CD4-positive, alpha-beta T cell (primary cell): ENCODE measurements at regions of chr11 and their contacts with region 1.

Region 1: GRCh38 chr11:124837491-124837856 is 27.8 kb upstream of the ROBO3 start:
- DNase-seq: peak in 3 of 14 experiments; percentile 16 to 41 (median 35)
- ATAC-seq: peak; percentile 45
- H3K4me3 ChIP-seq: no peak overlapping the region
- H3K4me3 Mint-ChIP-seq: peak overlapping the region; percentile 74
- H3K27ac ChIP-seq: no peak overlapping the region
- H3K27ac Mint-ChIP-seq: no peak overlapping the region
- H3K4me1 ChIP-seq: peaks cover 19% of the 10 kb centered on the region
- H3K4me1 Mint-ChIP-seq: peaks cover 21% of the 10 kb centered on the region
- H3K27me3 ChIP-seq: peaks cover 51 to 56% of the 10 kb centered on the region in 2 experiments
- H3K27me3 Mint-ChIP-seq: peaks cover 83% of the 10 kb centered on the region
- CTCF ChIP-seq: no peak

Region 2: DNA sequence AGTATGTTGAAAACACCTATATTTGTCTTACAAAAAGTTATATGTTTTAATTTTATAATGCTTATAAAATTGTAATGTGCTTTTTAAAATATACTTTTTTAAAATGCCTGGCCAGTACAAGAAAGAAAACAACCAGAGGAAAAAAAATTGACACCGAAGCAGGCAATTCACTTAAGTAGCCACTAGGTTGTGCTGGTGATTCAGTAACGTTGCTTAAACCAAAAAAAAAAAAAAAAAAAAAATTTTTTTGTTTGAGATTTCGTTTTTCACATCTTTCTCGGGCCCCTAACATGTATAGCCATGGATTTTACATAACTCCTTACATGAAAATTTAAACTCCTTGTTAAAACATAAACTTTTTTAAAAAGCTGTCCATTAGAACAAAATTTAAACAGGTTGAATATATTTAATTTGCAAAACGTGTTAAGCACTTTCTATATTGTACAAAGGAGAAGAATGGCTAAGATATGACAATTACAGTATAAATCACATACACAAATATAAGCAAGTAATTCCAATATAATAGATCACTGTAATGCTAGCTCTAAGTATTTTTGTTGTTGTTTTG is 422.0 kb before region 1 on chr11:
- CTCF ChIA-PET with region 1: no interaction called
- POLR2A ChIA-PET with region 1: no interaction called
- intact Hi-C with region 1: loop called (anchors 2 to 10 kb)
- DNase-seq: peak in 3 of 14 experiments; percentile 13 to 49 (median 23)
- ATAC-seq: peak; percentile 32
- H3K4me3 ChIP-seq: no peak overlapping the region
- H3K4me3 Mint-ChIP-seq: no peak overlapping the region
- H3K27ac ChIP-seq: no peak overlapping the region
- H3K27ac Mint-ChIP-seq: no peak overlapping the region
- H3K4me1 ChIP-seq: no peaks in the 10 kb centered on the region
- H3K4me1 Mint-ChIP-seq: no peaks in the 10 kb centered on the region
- H3K27me3 ChIP-seq: peaks cover 0 to 17% of the 10 kb centered on the region in 2 experiments
- H3K27me3 Mint-ChIP-seq: peaks cover 33% of the 10 kb centered on the region
- CTCF ChIP-seq: peak; percentile 70

Region 3: DNA sequence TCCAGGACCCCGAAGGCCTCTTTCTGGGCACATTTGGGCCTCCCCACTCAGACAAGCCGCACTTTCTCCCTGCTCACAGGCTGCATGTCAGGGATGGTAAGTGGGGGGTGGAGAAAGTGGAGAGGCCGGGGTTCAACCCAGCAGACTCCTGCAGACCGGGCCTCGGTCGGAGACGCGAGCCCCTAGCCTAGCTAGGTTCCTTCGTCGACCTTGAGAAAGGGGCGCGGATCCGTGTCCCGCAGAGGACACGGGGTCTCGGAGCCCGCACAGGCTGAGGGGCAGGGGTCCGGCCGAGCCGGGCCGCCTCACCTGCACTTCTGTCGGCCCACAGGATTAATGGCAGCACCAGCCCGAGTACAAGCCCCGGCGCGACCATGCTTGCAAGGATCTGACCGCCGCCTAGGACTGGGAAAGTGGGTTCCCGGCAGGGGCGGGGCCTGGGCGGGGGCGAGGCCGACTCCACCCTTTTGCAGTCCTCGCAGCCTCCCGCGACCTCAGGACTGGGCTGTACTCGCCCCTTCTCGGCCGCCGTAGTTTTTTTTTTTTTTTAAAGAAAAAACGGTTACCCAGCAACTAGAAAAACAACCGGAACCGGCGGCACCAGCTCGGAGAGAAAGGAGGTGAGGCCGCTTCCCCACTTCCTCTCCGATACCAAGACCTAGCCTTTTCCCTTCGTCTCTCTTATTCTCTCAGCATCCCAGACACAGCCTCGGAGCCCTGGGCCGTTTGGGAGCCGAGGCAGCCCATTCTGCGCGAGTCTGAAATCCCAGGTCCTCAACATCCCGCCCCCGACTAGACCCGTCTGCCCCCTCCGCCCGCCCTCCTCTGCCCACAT is 163.9 kb before region 1 on chr11 and contains the starts of genes SIAE and SPA17:
- CTCF ChIA-PET with region 1: interaction called, 13 read pairs
- POLR2A ChIA-PET with region 1: interaction called, 13 read pairs
- intact Hi-C with region 1: loop called (anchors 1 kb)
- DNase-seq: peak; percentile 70 to 95 (median 80)
- ATAC-seq: peak; percentile 66
- H3K4me3 ChIP-seq: peak within 1 kb of the TSS; percentile 85
- H3K4me3 Mint-ChIP-seq: peak within 1 kb of the TSS; percentile 91
- H3K27ac ChIP-seq: peak within 1 kb of the TSS; percentile 71 to 80
- H3K27ac Mint-ChIP-seq: no peak within 1 kb of the TSS
- H3K4me1 ChIP-seq: peaks cover 32% of the 10 kb centered on the region
- H3K4me1 Mint-ChIP-seq: peaks cover 42% of the 10 kb centered on the region
- H3K27me3 ChIP-seq: no peaks in the 10 kb centered on the region
- H3K27me3 Mint-ChIP-seq: no peaks in the 10 kb centered on the region
- CTCF ChIP-seq: no peak
- total RNA-seq, gene SIAE: 4.5 to 5.6 TPM
- total RNA-seq, gene SPA17: 0.16 TPM in 1 of 2 experiments, not detected in the other

Region 4: DNA sequence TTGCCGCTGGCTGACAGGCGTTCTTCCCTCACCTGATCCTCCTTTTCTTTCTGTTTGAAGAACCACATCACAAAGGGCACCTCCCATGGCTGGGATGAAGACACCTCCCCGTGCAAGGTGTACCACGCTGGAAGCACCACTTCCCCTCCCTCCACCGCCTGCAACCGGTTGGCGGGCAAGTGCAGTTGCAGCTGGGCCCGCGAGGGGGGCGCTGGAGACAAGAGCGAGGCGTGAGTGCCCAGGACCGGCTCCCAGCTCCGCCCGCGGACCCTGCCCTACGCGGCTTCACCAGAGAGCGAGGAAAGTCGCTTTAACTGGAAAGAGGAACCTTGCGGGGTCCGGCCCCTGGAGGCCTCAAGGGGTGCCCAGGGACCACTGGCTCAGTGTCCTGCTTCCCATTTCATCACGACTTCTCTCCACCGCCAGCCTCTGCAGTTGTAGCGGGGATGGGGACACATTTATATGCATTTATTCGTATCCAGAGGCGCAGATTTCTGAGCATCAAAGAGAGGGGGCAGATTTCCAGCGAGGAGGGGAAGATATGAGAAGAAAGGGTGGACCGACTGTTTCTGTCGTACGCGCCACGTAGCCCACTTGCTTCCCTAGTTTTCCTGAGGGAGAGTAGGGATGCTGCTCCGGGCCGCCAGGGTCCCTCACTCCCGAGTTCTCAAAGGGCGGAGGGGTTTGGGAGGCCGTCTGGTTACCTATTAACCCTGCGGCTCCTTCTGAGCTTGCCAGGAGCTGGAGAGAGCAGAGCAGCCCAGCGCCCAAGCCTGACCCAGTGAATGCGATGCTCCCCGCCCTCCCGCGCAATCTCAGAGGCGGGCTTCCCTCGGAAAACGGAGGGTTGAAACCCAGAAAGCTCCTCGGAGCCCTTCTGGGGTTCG is 78.9 kb before region 1 on chr11:
- CTCF ChIA-PET with region 1: interaction called, 9 read pairs
- POLR2A ChIA-PET with region 1: interaction called, 3 read pairs
- intact Hi-C with region 1: loop called (anchors 2 to 5 kb)
- DNase-seq: peak; percentile 41 to 84 (median 62)
- ATAC-seq: peak; percentile 80
- H3K4me3 ChIP-seq: peak overlapping the region; percentile 13
- H3K4me3 Mint-ChIP-seq: peak overlapping the region; percentile 59
- H3K27ac ChIP-seq: no peak overlapping the region
- H3K27ac Mint-ChIP-seq: no peak overlapping the region
- H3K4me1 ChIP-seq: peaks cover 53% of the 10 kb centered on the region
- H3K4me1 Mint-ChIP-seq: peaks cover 36% of the 10 kb centered on the region
- H3K27me3 ChIP-seq: peaks cover 55 to 60% of the 10 kb centered on the region in 2 experiments
- H3K27me3 Mint-ChIP-seq: peaks cover 76% of the 10 kb centered on the region
- CTCF ChIP-seq: peak; percentile 78

Region 5: DNA sequence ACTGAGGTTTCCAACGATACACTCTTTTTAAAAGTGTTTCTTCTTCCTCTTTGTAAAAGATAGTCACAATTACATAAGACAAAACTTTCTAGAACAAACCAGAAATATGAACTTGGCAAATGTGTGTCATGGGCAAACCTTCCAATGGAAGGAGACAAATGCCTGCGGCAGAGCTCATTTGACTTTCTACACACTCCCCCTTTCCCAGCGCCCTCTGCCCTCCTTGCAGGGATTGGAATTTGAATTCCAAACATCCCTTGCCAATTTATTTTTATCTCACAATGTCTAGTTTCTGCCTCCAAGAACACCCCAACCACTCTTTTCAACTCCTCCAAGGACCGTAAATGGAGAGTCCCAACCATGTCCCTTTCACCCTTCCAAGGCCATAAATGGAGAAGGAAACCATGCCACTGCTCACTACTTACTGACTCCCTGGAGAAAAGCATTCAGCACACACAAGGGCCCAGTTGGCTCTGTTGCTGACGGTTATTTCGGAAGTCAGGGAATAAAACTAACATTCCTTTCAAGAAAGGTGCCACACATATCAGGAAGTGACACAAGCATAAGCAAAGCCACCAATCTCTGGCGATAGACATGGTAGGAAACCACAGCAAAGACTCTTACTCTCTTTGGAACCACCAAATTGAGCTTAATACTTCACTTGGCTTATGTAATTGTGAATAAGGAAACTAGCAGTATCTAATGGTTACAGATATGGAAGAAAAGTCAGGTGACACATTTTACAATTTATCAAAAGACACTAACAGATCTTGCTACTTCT is 60.4 kb before region 1 on chr11:
- CTCF ChIA-PET with region 1: no interaction called
- POLR2A ChIA-PET with region 1: no interaction called
- intact Hi-C with region 1: no loop called
- DNase-seq: peak in 3 of 14 experiments; percentile 25 to 46 (median 33)
- ATAC-seq: peak; percentile 92
- H3K4me3 ChIP-seq: no peak overlapping the region
- H3K4me3 Mint-ChIP-seq: no peak overlapping the region
- H3K27ac ChIP-seq: no peak overlapping the region
- H3K27ac Mint-ChIP-seq: peak overlapping the region; percentile 38
- H3K4me1 ChIP-seq: peaks cover 3% of the 10 kb centered on the region
- H3K4me1 Mint-ChIP-seq: peaks cover 28% of the 10 kb centered on the region
- H3K27me3 ChIP-seq: no peaks in the 10 kb centered on the region
- H3K27me3 Mint-ChIP-seq: no peaks in the 10 kb centered on the region
- CTCF ChIP-seq: no peak

Region 6: DNA sequence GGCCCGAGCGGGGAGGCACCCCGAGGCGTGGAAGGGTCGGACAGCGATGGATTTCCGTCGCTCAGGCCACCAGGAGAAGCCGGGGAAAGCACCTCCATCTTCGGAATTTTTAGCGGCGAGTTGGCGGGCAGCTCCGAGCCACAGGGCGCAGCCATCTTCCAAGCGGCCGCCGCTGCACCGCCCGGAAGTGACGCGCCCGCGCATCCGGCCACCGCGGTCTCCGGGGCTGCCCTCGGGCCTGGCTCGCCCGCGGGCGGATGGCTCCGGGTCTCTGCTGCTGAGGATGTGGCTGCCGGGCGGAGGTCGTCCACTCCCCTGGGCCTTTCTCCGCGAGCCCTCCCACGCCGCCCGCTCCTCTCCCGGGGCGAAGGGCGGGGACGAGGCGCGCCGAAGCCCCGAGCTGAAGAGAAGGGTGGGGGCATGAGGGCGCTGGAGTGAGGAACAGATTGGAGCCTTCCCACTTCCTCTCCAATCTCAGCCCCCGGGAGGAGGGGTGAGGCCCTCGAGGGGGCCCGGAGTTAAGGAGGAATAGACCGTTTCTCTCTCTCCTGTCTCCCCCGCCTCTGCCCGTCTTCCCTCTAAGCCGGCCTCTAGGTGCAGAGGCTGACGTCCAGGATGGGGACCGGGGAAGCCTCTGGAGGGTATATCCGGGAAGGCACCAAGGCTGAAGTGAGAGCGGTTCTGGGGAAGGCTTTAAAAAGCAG is 37.1 kb before region 1 on chr11 and contains the start of gene MSANTD2:
- CTCF ChIA-PET with region 1: interaction called, 3 read pairs
- POLR2A ChIA-PET with region 1: interaction called, 8 read pairs
- intact Hi-C with region 1: loop called (anchors 2 kb)
- DNase-seq: peak; percentile 53 to 89 (median 71)
- ATAC-seq: peak; percentile 79
- H3K4me3 ChIP-seq: peak within 1 kb of the TSS; percentile 85
- H3K4me3 Mint-ChIP-seq: peak within 1 kb of the TSS; percentile 98
- H3K27ac ChIP-seq: peak within 1 kb of the TSS; percentile 94 to 96
- H3K27ac Mint-ChIP-seq: peak within 1 kb of the TSS; percentile 95
- H3K4me1 ChIP-seq: peaks cover 20% of the 10 kb centered on the region
- H3K4me1 Mint-ChIP-seq: peaks cover 25% of the 10 kb centered on the region
- H3K27me3 ChIP-seq: no peaks in the 10 kb centered on the region
- H3K27me3 Mint-ChIP-seq: no peaks in the 10 kb centered on the region
- CTCF ChIP-seq: no peak
- total RNA-seq, gene MSANTD2: 4.2 to 5.1 TPM

Region 7: GRCh38 chr11:124865921-124866583 is 28.6 kb after region 1 on chr11:
- CTCF ChIA-PET with region 1: interaction called, 4 read pairs
- POLR2A ChIA-PET with region 1: no interaction called
- intact Hi-C with region 1: loop called in 1 of 2 experiments (anchors 2 kb)
- DNase-seq: peak in 12 of 14 experiments; percentile 21 to 77 (median 40)
- ATAC-seq: peak; percentile 72
- H3K4me3 ChIP-seq: peak overlapping the region; percentile 34
- H3K4me3 Mint-ChIP-seq: no peak overlapping the region
- H3K27ac ChIP-seq: no peak overlapping the region
- H3K27ac Mint-ChIP-seq: no peak overlapping the region
- H3K4me1 ChIP-seq: peaks cover 53% of the 10 kb centered on the region
- H3K4me1 Mint-ChIP-seq: peaks cover 58% of the 10 kb centered on the region
- H3K27me3 ChIP-seq: peaks cover 93 to 100% of the 10 kb centered on the region in 2 experiments
- H3K27me3 Mint-ChIP-seq: peaks cover 96% of the 10 kb centered on the region
- CTCF ChIP-seq: peak; percentile 73

Region 8: DNA sequence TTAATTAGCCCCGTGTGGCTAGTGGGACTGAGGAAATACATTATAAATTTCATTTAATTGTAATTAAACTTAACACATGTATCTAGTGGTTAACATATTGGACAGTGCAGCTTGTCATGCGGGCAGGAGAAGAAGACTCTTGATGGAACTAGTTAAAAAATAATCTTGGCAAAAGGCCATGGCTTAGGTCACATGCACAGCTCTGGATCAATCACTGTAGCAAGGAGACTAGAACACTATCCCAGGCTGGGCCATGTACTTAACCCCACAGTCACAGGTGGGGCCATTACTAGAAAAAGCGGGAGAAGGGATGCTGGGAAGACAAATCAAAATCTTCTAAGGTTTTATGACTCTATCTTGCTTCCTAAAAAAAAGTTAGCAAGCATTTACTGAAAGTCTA is 107.1 kb after region 1 on chr11:
- CTCF ChIA-PET with region 1: no interaction called
- POLR2A ChIA-PET with region 1: no interaction called
- intact Hi-C with region 1: no loop called
- DNase-seq: no peak
- ATAC-seq: no peak
- H3K4me3 ChIP-seq: no peak overlapping the region
- H3K4me3 Mint-ChIP-seq: no peak overlapping the region
- H3K27ac ChIP-seq: no peak overlapping the region
- H3K27ac Mint-ChIP-seq: no peak overlapping the region
- H3K4me1 ChIP-seq: peaks cover 14% of the 10 kb centered on the region
- H3K4me1 Mint-ChIP-seq: peaks cover 31% of the 10 kb centered on the region
- H3K27me3 ChIP-seq: no peaks in the 10 kb centered on the region
- H3K27me3 Mint-ChIP-seq: no peaks in the 10 kb centered on the region
- CTCF ChIP-seq: no peak